Common myeloid progenitor, CD34-positive (primary cell): ENCODE measurements at regions of chr9 and their contacts with region 1.

Region 1: DNA sequence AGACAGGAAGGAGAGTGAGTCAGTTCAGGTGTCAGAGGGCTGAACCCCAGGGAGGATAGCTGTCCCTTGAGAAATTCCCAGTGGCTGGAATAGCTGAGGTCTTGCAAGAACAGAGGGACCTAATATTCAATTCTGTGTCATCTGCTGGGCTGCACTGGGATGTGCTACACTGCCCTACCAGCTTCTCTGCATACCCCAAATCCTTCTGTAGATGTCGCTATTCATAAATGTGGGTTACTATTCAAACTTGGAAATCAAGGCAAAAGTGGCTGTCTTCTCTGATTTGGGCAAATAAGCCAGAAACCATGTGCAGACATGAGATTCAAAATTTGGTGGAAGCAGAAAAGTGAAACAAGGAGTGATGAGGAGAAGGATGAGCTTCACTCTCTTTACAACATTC is 16.3 kb downstream of the TNFSF8 start:
- DNase-seq: no peak
- H3K4me3 ChIP-seq: no peak overlapping the region
- H3K27ac ChIP-seq: no peak overlapping the region
- H3K4me1 ChIP-seq: peaks cover 2 to 19% (median 8%) of the 10 kb centered on the region in 4 experiments
- H3K27me3 ChIP-seq: no peaks in the 10 kb centered on the region

Region 2: GRCh38 chr9:115008536-115009270 is 94.6 kb after region 1 on chr9:
- CTCF ChIA-PET with region 1: interaction called, 79 read pairs
- POLR2A ChIA-PET with region 1: no interaction called
- DNase-seq: peak; percentile 20 to 53 (median 52)
- H3K4me3 ChIP-seq: no peak overlapping the region
- H3K27ac ChIP-seq: no peak overlapping the region
- H3K4me1 ChIP-seq: peaks cover 0 to 5% (median 1%) of the 10 kb centered on the region in 4 experiments
- H3K27me3 ChIP-seq: no peaks in the 10 kb centered on the region